MCF 10A (cell line): ENCODE measurements at regions of chr13 and their contacts with region 1.

Region 1: GRCh38 chr13:110915057-110915873 is at the start of gene ANKRD10:
- DNase-seq: peak; percentile 98
- H3K4me3 Mint-ChIP-seq: peak within 1 kb of the TSS; percentile 67
- H3K27ac Mint-ChIP-seq: peak within 1 kb of the TSS; percentile 80
- H3K4me1 Mint-ChIP-seq: peaks cover 19% of the 10 kb centered on the region
- H3K27me3 Mint-ChIP-seq: no peaks in the 10 kb centered on the region
- CTCF ChIP-seq: peak; percentile 75
- total RNA-seq, gene ANKRD10: 61.7 and 76.0 TPM in 2 replicates

Region 2: GRCh38 chr13:110593430-110594130 is 321.7 kb before region 1 on chr13:
- CTCF ChIA-PET with region 1: interaction called, 4 read pairs
- POLR2A ChIA-PET with region 1: interaction called, 4 read pairs
- intact Hi-C with region 1: loop called (anchors 10 kb)
- DNase-seq: peak; percentile 64
- H3K4me3 Mint-ChIP-seq: no peak overlapping the region
- H3K27ac Mint-ChIP-seq: no peak overlapping the region
- H3K4me1 Mint-ChIP-seq: peaks cover 10% of the 10 kb centered on the region
- H3K27me3 Mint-ChIP-seq: no peaks in the 10 kb centered on the region
- CTCF ChIP-seq: peak; percentile 55

Region 3: GRCh38 chr13:110697842-110698241 is 217.4 kb before region 1 on chr13:
- CTCF ChIA-PET with region 1: no interaction called
- POLR2A ChIA-PET with region 1: no interaction called
- intact Hi-C with region 1: no loop called
- DNase-seq: no peak
- H3K4me3 Mint-ChIP-seq: no peak overlapping the region
- H3K27ac Mint-ChIP-seq: no peak overlapping the region
- H3K4me1 Mint-ChIP-seq: peaks cover 15% of the 10 kb centered on the region
- H3K27me3 Mint-ChIP-seq: no peaks in the 10 kb centered on the region
- CTCF ChIP-seq: no peak

Region 4: DNA sequence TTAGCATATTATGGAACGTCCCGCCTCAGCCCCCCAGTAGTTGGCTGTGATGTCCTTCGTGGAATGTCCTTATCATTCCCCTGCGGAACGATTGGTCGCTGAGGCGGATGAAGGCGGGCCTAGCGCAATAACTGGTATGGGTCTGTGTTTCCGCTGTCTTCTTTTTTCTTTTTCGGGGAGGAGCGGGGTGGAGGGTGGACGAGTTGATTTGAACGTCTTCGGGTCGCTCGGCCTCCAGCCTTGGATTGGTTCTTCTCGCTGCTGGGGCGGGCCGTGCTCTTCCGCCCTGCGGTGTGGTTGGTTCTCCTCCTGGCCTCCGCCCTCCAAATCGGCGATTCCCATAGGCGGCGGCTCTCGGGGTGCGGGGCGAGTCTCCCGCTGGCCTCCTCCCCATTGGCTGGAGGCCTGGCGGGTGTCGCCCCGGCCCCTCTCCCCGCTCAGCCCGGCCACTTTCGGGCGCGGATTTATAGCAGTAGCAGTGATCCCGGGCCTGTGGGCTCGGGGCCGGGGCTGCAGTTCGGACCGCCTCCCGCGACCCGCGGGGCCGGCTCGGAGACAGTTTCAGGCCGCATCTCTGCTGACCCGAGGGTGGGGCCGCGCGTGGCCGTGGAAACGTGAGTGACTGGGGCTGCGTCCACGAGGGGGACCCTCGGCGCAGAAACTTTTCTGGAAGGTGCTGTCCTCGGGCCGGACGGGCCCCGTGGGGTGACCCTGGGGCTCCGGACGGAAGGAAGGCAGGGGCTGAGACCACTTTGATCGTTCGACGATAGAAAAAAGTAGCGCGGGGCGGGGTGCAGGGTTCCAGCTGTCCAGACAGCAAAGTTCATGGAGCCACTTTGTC is 199.7 kb before region 1 on chr13:
- CTCF ChIA-PET with region 1: no interaction called
- POLR2A ChIA-PET with region 1: interaction called, 38 read pairs
- intact Hi-C with region 1: loop called (anchors 2 kb)
- DNase-seq: peak; percentile 100
- H3K4me3 Mint-ChIP-seq: peak overlapping the region; percentile 92
- H3K27ac Mint-ChIP-seq: peak overlapping the region; percentile 91
- H3K4me1 Mint-ChIP-seq: no peaks in the 10 kb centered on the region
- H3K27me3 Mint-ChIP-seq: no peaks in the 10 kb centered on the region
- CTCF ChIP-seq: peak; percentile 18

Region 5: GRCh38 chr13:110953833-110954534 is 38.7 kb after region 1 on chr13:
- CTCF ChIA-PET with region 1: interaction called, 3 read pairs
- POLR2A ChIA-PET with region 1: interaction called, 5 read pairs
- intact Hi-C with region 1: loop called (anchors 2 kb)
- DNase-seq: no peak
- H3K4me3 Mint-ChIP-seq: no peak overlapping the region
- H3K27ac Mint-ChIP-seq: peak overlapping the region; percentile 95
- H3K4me1 Mint-ChIP-seq: peaks cover 19% of the 10 kb centered on the region
- H3K27me3 Mint-ChIP-seq: no peaks in the 10 kb centered on the region
- CTCF ChIP-seq: no peak

Region 6: DNA sequence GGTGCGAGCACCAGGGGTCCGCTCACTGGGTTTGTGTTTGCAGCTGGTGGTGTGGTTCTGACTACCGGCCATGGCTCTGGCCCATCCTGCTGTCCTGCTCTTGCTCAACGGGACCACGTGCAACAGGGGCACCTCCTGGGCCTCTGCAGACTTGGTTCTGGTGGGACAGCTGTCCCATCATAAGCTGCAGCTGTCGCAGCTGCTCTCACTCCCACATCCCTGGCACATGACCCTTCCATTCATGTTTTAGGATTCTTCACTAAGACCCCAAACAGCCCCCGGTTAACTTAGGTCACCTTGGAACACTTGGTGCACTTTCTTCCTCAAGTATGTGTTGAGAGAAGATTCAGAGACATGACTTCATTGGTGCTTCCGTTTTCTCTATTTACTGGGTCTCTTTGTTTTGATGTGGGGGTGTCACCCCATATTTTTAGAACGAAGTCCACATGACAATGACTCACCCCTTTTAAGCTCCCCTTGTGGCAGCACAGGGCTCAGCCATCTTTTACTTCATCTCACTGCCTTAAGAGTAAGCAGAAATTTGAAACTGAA is 131.4 kb after region 1 on chr13:
- CTCF ChIA-PET with region 1: interaction called, 8 read pairs
- POLR2A ChIA-PET with region 1: interaction called, 3 read pairs
- intact Hi-C with region 1: loop called (anchors 1 kb)
- DNase-seq: no peak
- H3K4me3 Mint-ChIP-seq: no peak overlapping the region
- H3K27ac Mint-ChIP-seq: no peak overlapping the region
- H3K4me1 Mint-ChIP-seq: peaks cover 14% of the 10 kb centered on the region
- H3K27me3 Mint-ChIP-seq: peaks cover 11% of the 10 kb centered on the region
- CTCF ChIP-seq: no peak